H1 (cell line): ENCODE measurements at regions of chr4 and their contacts with region 1.

Region 1: DNA sequence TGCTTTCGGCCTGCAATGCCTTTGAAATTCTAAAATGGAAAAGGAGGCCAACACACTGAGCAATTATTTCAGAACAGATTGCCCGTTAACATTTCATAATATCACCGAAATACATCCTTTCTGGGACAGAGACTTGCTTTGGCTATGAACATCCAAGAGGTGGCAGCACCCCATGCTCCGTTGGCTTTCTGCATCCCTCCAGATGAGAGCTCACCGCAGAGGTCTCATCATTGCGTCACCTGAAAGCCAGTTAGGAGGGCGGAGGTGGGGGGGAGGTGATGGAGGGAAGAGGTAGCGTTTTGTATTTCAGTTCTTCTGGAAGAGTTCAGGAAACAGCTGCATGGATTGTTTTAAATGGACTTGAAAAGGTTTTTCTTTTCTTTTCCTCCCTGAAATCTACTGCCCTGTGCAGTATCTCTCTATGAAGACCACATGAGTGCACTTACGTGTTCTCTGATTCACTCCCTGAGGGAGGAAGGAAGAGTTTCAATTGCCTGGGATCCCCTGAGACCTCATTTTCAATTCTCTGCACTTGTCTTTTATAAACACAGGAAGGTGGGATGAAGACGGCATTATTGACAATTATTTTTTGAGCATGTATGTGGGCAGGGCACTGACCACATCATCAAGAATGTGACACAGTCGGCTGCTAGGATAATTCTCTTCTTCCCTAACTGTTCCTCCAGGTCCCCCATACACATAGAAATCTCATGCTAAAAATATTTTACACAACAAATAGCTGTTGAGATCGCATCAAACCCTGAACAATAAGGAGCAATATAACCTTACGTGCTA is 166.9 kb upstream of the PGRMC2 start:
- DNase-seq: peak; percentile 73
- H3K4me3 ChIP-seq: no peak overlapping the region
- H3K27ac ChIP-seq: no peak overlapping the region
- H3K4me1 ChIP-seq: no peaks in the 10 kb centered on the region
- H3K27me3 ChIP-seq: no peaks in the 10 kb centered on the region
- CTCF ChIP-seq: peak; percentile 68 to 92 (median 72)
- EP300 ChIP-seq: no peak
- POLR2A ChIP-seq: no peak
- RAD21 ChIP-seq: peak; percentile 87 to 90

Region 2: DNA sequence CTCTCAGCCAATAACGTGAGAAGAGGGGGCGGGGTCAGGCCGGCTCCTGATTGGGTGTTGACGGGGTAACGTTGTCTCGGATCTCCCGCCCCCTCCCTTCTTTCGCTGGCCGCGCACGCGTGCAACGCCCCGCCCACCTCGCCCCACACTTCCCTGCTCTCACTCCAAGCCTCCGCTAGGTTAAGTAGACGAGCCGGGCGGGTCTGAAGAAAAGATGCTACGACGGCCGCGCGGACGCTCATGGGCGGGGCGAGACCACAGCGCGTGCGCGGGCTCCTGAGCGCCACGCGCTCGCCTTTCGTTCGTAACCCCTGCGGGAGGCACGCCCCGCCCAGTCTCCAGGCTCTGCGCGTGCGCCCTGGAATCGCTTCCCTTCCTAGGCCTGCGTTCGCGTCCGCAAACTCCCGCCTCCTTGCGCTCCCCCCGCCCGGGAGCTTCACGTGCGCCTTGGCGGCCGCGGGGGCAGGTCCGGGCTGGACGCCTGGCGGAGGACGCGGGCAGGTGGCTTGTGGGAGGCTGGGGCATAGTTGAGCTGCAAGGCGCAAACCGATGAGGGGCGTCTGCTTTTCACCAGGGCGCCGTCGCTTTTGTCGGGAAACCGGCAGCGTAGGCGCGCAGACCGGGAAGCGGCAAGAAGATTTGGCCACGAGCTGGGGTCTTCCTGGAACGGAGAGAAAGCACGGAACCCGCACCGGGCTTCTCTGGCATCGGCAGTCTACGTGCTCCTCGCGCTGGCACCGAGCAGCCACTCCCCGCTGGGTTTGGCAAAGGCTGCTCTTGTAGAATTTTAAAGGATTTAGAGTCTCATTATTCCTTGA is 166.4 kb before region 1 on chr4:
- CTCF ChIA-PET with region 1: interaction called, 10 read pairs
- POLR2A ChIA-PET with region 1: interaction called, 3 read pairs
- DNase-seq: peak; percentile 95 to 98
- H3K4me3 ChIP-seq: peak overlapping the region; percentile 64 to 95 (median 79)
- H3K27ac ChIP-seq: peak overlapping the region; percentile 94
- H3K4me1 ChIP-seq: peaks cover 0 to 8% (median 3%) of the 10 kb centered on the region in 4 experiments; a peak in 4 of 7 replicates
- H3K27me3 ChIP-seq: no peaks in the 10 kb centered on the region
- CTCF ChIP-seq: peak; percentile 12 to 23 (median 14)
- EP300 ChIP-seq: no peak
- POLR2A ChIP-seq: peak; percentile 27 to 63
- RAD21 ChIP-seq: no peak; a peak in 1 of 4 replicates

Region 3: DNA sequence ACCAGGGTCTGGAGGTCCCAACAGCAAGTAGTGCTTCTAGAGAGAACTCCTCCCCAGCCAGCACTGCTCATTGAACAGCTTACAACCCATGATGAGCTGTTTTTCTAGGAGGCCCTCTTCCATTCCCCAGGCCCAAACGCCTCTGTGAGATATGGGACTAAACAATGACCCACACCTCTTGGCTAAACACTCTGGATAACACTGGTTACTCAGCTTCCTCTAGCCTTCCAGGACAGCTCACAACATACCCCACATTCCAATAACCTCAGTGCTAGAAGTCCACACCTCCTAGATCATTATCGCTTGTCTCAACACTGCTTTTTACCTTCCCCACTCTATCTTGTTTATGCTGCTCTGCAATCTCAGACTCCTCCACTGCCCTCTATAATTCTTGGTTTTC is 131.5 kb before region 1 on chr4:
- CTCF ChIA-PET with region 1: no interaction called
- POLR2A ChIA-PET with region 1: no interaction called
- DNase-seq: no peak
- H3K4me3 ChIP-seq: no peak overlapping the region
- H3K27ac ChIP-seq: no peak overlapping the region
- H3K4me1 ChIP-seq: peaks cover 0 to 4% (median 3%) of the 10 kb centered on the region in 4 experiments; a peak in 3 of 7 replicates
- H3K27me3 ChIP-seq: no peaks in the 10 kb centered on the region
- CTCF ChIP-seq: no peak
- EP300 ChIP-seq: no peak
- POLR2A ChIP-seq: no peak
- RAD21 ChIP-seq: no peak

Region 4: GRCh38 chr4:128471576-128471975 is 17.1 kb after region 1 on chr4:
- CTCF ChIA-PET with region 1: interaction called, 10 read pairs
- POLR2A ChIA-PET with region 1: interaction called, 4 read pairs
- DNase-seq: no peak
- H3K4me3 ChIP-seq: no peak overlapping the region
- H3K27ac ChIP-seq: no peak overlapping the region
- H3K4me1 ChIP-seq: no peaks in the 10 kb centered on the region
- H3K27me3 ChIP-seq: no peaks in the 10 kb centered on the region
- CTCF ChIP-seq: no peak
- EP300 ChIP-seq: no peak
- POLR2A ChIP-seq: no peak
- RAD21 ChIP-seq: no peak

Region 5: DNA sequence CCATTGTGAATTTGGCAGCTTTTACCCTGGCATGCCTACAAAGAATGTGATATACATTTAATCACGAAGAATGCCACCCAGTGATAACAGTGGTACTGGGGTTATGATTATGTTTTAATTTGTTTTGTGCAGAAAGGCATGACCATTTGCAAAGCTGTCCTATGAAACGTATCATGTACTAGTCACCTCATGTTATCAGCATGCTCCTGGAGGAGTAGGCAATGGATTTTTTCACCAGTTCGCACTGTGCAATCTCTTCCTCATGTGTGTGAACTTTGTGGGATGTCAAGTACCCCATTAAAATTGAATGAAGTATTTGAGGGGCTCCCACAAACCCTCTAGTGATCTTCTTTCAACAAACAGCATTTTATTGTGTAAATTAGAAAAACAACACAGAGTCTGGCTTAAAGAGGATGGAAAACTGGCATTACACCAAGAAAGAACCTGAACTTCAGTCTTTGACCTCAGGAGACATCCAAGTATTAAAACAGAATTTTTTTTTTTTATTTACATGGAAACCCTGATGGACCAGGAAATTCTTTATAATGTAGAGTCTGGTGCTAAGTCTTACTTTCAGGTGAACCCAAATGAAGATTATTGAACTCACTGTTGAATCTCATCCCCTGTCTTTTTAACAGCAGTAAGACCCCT is 33.7 kb after region 1 on chr4:
- CTCF ChIA-PET with region 1: interaction called, 10 read pairs
- POLR2A ChIA-PET with region 1: no interaction called
- DNase-seq: no peak
- H3K4me3 ChIP-seq: no peak overlapping the region
- H3K27ac ChIP-seq: no peak overlapping the region
- H3K4me1 ChIP-seq: no peaks in the 10 kb centered on the region
- H3K27me3 ChIP-seq: no peaks in the 10 kb centered on the region
- CTCF ChIP-seq: no peak
- EP300 ChIP-seq: no peak
- POLR2A ChIP-seq: no peak
- RAD21 ChIP-seq: no peak

Region 6: GRCh38 chr4:128542041-128542440 is 87.6 kb after region 1 on chr4:
- CTCF ChIA-PET with region 1: interaction called, 12 read pairs
- POLR2A ChIA-PET with region 1: no interaction called
- DNase-seq: no peak
- H3K4me3 ChIP-seq: no peak overlapping the region
- H3K27ac ChIP-seq: no peak overlapping the region
- H3K4me1 ChIP-seq: no peaks in the 10 kb centered on the region
- H3K27me3 ChIP-seq: no peaks in the 10 kb centered on the region
- CTCF ChIP-seq: no peak
- EP300 ChIP-seq: no peak
- POLR2A ChIP-seq: no peak
- RAD21 ChIP-seq: no peak

Region 7: DNA sequence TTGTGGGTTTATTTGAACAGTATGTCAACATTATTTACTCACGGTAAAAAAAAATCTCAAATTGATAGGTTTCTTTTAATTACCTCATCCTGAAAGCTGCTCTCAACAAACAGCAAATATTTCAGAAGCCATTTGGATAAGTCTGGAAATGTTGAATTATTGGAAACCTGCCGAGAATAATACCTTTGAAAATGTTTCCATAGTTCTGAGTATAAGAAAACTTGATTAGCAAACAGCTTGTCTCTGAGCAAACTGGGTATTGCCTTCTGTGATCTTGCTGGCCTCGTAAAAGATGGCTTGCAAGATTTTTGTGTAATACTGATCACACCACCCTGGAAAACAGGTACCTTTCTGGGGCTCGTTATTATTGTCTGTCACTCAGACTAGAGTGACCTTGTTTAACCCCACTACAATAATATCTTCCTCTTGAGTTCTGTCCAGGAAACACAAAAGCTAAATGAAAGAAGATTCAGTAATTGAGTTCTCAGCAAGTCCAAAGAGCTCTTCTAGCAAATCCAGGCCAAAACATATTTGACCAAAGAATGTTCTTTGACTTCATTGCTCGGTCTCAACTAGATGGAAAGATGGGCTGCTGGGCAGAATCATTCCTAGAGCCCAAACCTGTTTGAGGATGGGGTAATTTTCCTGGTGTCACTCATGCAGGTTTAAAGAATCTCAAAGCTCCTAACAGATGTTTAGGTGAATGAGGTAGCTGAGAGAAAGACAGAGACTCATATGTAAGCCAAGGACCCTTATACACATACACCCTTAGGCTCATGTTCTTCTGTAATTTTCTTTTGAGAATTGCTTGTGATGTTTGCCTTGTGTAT is 99.4 kb after region 1 on chr4:
- CTCF ChIA-PET with region 1: interaction called, 21 read pairs
- POLR2A ChIA-PET with region 1: no interaction called
- DNase-seq: no peak
- H3K4me3 ChIP-seq: no peak overlapping the region
- H3K27ac ChIP-seq: no peak overlapping the region
- H3K4me1 ChIP-seq: peaks cover 0 to 2% (median 0%) of the 10 kb centered on the region in 4 experiments; a peak in 1 of 7 replicates
- H3K27me3 ChIP-seq: no peaks in the 10 kb centered on the region
- CTCF ChIP-seq: no peak
- EP300 ChIP-seq: no peak
- POLR2A ChIP-seq: no peak
- RAD21 ChIP-seq: no peak